ENCODE measurements at regions of chr5 and their contacts with region 1.

Region 1: DNA sequence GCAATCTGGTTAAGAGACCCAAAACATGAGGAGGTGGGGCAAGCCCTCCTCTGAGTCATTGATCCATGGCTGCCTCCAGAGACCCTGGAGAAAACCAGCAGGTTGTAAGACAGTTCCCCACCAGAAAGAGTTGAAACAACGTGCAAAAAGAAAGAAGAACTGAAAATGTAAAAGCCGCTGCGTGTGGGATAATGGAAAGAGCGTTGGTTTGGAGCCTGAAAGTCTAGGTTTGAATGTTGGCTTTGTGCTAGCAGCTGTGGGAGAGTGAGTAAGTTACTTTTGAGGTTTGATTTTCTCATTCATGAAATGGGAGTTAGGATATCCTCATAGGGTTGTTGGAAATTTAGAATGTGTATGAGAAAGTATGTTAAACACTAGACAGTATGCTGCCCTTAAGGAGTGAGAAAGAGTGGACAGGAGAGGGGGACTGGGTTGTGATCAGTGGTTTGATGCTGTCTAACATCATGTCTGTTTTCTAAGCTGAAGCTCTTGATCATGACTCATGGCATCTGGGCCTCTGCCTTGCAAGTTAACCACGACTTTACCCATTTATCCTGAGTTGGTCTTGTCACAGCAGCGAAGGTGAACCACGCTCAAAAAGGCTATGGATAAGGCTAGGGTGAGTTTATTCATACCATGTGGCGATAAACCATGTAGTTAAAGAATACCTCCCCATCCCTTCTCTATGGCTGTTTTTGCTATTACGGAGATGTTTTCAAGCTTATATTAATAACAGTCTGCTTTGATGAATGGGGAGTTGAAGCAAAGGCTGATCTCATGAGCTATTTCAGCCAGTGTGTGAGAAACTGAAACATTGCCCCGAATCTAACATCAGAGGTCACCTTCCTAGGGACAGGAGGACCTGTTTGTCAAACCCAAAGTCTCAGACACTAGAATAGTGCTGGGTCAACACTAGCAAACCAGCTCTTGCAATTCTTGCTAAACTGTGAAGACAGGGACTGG is 41.3 kb downstream of the ZNF366 start:
- DNase-seq: peak; percentile 23
- H3K4me3 ChIP-seq: no peak overlapping the region
- H3K27ac ChIP-seq: no peak overlapping the region
- H3K4me1 ChIP-seq: peaks cover 36% of the 10 kb centered on the region
- H3K27me3 ChIP-seq: no peaks in the 10 kb centered on the region
- CTCF ChIP-seq: no peak
- POLR2A ChIP-seq: no peak

Region 2: GRCh38 chr5:72477176-72477575 is 11.3 kb after region 1 on chr5:
- CTCF ChIA-PET with region 1: interaction called, 10 read pairs
- POLR2A ChIA-PET with region 1: interaction called, 7 read pairs
- dilution Hi-C with region 1: no loop called
- intact Hi-C with region 1: loop called (anchors 1 kb)
- DNase-seq: peak; percentile 90
- H3K4me3 ChIP-seq: no peak overlapping the region
- H3K27ac ChIP-seq: peak overlapping the region; percentile 53
- H3K4me1 ChIP-seq: peaks cover 25% of the 10 kb centered on the region
- H3K27me3 ChIP-seq: no peaks in the 10 kb centered on the region
- CTCF ChIP-seq: no peak
- POLR2A ChIP-seq: peak; percentile 36

Measured in endothelial cell of umbilical vein (primary cell).